WTC11 (cell line): ENCODE measurements at regions of chr21 and their contacts with region 1.

Region 1: DNA sequence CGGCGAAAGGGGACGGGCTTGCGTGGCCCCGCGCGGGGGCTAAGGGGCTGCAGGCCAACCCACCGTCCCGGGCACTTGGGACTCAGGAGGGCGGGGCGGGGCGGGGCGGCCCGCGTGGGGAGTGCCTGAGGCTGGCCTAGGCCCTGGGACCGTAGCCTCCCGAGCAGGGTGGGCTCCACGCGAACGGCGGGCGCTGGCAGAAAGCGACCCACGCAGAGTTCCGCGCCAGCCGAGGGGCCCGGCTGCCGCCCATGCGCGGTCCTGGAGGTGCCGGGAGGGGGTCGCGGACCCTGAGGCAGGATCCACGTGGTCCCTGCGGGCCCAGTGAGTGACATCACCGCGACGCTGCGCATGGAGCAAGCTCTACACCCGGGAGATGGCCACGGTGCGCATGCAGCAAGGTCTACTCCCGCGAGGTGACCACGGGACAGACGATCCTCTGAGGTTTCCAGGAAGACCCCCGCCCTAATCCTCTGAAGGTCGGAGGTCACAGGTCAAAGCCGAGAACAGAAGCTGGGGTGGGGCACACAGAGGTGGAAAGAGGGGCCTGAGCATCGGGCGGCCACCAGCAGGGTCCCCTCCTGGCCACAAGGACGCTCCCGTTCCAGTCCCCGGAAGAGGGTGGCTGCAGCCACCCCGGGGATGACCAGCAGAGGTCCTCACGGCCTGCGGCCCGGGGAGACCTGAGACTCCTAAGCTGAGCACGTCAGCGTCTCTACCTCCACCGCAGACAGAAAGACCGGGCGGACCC is 13.5 kb upstream of the SLC19A1 start:
- DNase-seq: peak; percentile 85
- ATAC-seq: peak; percentile 82
- H3K4me3 Mint-ChIP-seq: peak overlapping the region; percentile 59
- H3K27ac Mint-ChIP-seq: no peak overlapping the region; the same call in 1 of the 2 replicates
- H3K4me1 Mint-ChIP-seq: peaks cover 28% of the 10 kb centered on the region
- H3K27me3 Mint-ChIP-seq: peaks cover 7% of the 10 kb centered on the region; the same call in 1 of the 2 replicates
- CTCF ChIP-seq: 0 out of 2 replicates have a peak, but pooled peaks have one; percentile 43

Region 2: GRCh38 chr21:45220071-45220481 is 335.6 kb before region 1 on chr21:
- CTCF ChIA-PET with region 1: no interaction called
- POLR2A ChIA-PET with region 1: no interaction called
- DNase-seq: no peak
- ATAC-seq: no peak
- H3K4me3 Mint-ChIP-seq: no peak overlapping the region
- H3K27ac Mint-ChIP-seq: no peak overlapping the region
- H3K4me1 Mint-ChIP-seq: peaks cover 10% of the 10 kb centered on the region; the same call in 1 of the 2 replicates
- H3K27me3 Mint-ChIP-seq: no peaks in the 10 kb centered on the region
- CTCF ChIP-seq: no peak

Region 3: DNA sequence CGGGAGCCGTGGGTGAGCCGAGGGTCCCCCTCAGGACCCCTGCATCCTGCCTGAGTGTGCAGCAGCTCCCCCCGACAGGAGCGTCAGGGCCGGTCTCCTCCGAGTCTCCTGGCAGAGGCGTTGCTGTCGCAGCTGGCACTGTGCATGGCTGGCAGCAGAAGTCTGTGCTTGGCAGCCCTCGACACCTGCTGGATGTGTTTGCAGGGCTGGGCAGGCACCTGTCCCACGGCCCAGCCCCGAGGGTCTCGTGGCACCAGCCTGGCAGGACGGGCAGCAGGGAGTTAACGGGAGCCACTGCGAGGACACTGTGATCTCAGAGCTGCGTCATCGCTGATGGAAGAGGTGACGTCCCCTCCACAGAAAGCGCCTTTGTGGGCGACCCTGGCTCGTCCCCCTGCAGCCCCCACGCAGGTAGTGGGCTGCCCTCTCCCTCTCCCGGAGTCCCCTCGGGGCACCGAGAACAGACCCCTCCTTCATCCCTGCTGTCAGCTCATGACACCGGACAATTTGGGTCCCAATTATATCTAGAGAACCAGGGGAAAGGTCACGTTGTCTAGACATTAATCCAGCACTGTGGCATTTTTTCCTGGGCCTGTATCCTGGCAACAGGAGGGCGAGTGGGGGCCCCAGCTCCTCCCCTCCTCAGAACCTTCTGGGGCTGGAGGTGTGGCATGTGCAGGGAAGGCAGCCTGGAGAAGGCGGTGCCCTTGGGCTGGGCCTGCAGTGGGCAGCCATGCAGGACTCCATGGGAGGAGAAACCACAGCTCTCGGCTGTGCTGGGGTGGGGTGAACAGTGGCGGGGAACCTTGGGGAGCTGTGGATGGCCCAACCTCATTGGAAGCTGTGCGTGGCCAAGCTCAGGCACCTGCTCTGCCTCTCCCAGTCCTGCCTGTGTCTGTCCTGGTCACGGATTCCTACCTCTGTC is 135.4 kb before region 1 on chr21:
- CTCF ChIA-PET with region 1: no interaction called
- POLR2A ChIA-PET with region 1: no interaction called
- DNase-seq: no peak
- ATAC-seq: no peak
- H3K4me3 Mint-ChIP-seq: no peak overlapping the region
- H3K27ac Mint-ChIP-seq: peak overlapping the region; percentile 80
- H3K4me1 Mint-ChIP-seq: peaks cover 29% of the 10 kb centered on the region
- H3K27me3 Mint-ChIP-seq: no peaks in the 10 kb centered on the region
- CTCF ChIP-seq: no peak

Region 4: GRCh38 chr21:45542242-45542666 is 13.5 kb before region 1 on chr21 and contains the start of gene SLC19A1:
- CTCF ChIA-PET with region 1: interaction called, 15 read pairs
- POLR2A ChIA-PET with region 1: no interaction called
- DNase-seq: peak; percentile 45
- ATAC-seq: peak; percentile 58
- H3K4me3 Mint-ChIP-seq: peak within 1 kb of the TSS; percentile 64
- H3K27ac Mint-ChIP-seq: no peak within 1 kb of the TSS
- H3K4me1 Mint-ChIP-seq: peaks cover 7% of the 10 kb centered on the region; the same call in 1 of the 2 replicates
- H3K27me3 Mint-ChIP-seq: peaks cover 9% of the 10 kb centered on the region
- CTCF ChIP-seq: no peak
- total RNA-seq, gene SLC19A1: 27.7 to 29.8 TPM (median 28.3 TPM) in 3 replicates

Region 5: DNA sequence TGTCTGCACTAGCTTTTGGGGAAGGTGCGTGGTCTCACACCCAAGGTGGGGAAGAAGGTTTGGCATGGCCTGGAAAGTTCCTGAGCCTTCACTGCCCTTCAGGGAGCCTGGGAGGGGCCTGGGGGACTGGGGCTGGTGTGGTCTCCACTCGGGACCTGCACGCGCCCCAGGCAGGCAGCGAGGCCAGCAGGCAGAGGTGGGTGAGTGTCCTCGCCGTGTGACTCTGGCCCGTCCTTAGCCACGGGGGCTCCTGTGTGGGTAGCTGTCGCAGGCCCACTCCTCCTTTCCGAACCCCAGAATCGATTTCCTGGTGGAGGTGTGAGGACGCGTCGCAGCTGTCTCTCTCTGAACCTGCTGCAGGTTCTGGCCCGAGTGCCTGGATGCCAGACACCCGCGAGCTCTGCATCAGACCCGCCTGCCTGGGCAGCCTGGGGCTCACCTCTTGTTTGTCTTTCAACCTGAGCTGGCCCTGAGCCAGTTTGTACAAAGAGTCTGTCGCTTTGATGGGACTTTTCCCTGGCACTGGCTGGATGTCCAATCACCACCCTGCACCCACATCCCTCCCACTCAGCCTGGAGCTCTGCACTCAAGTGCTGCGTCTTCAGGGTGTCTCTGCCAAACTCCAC is 22.6 kb after region 1 on chr21:
- CTCF ChIA-PET with region 1: interaction called, 41 read pairs
- POLR2A ChIA-PET with region 1: no interaction called
- DNase-seq: peak; percentile 9
- ATAC-seq: no peak
- H3K4me3 Mint-ChIP-seq: no peak overlapping the region
- H3K27ac Mint-ChIP-seq: no peak overlapping the region
- H3K4me1 Mint-ChIP-seq: no peaks in the 10 kb centered on the region
- H3K27me3 Mint-ChIP-seq: peaks cover 9% of the 10 kb centered on the region
- CTCF ChIP-seq: no peak

Region 6: GRCh38 chr21:45596704-45597318 is 41.1 kb after region 1 on chr21:
- CTCF ChIA-PET with region 1: interaction called, 43 read pairs
- POLR2A ChIA-PET with region 1: no interaction called
- DNase-seq: peak; percentile 88
- ATAC-seq: peak; percentile 96
- H3K4me3 Mint-ChIP-seq: no peak overlapping the region
- H3K27ac Mint-ChIP-seq: no peak overlapping the region
- H3K4me1 Mint-ChIP-seq: no peaks in the 10 kb centered on the region
- H3K27me3 Mint-ChIP-seq: peaks cover 18% of the 10 kb centered on the region
- CTCF ChIP-seq: peak; percentile 70

Region 7: GRCh38 chr21:45640888-45641479 is 85.3 kb after region 1 on chr21:
- CTCF ChIA-PET with region 1: interaction called, 23 read pairs
- POLR2A ChIA-PET with region 1: no interaction called
- DNase-seq: peak; percentile 62
- ATAC-seq: peak; percentile 6; the same call in 1 of the 2 replicates
- H3K4me3 Mint-ChIP-seq: peak overlapping the region; percentile 60; the same call in 1 of the 2 replicates
- H3K27ac Mint-ChIP-seq: no peak overlapping the region
- H3K4me1 Mint-ChIP-seq: peaks cover 34% of the 10 kb centered on the region
- H3K27me3 Mint-ChIP-seq: peaks cover 44% of the 10 kb centered on the region
- CTCF ChIP-seq: no peak

Region 8: GRCh38 chr21:45820171-45821091 is 264.7 kb after region 1 on chr21:
- CTCF ChIA-PET with region 1: interaction called, 35 read pairs
- POLR2A ChIA-PET with region 1: no interaction called
- DNase-seq: peak; percentile 89
- ATAC-seq: peak; percentile 92
- H3K4me3 Mint-ChIP-seq: no peak overlapping the region
- H3K27ac Mint-ChIP-seq: peak overlapping the region; percentile 85; the same call in 1 of the 2 replicates
- H3K4me1 Mint-ChIP-seq: peaks cover 22% of the 10 kb centered on the region
- H3K27me3 Mint-ChIP-seq: no peaks in the 10 kb centered on the region
- CTCF ChIP-seq: peak; percentile 68